GM10248 (cell line): ENCODE measurements at regions of chr3 and their contacts with region 1.

Region 1: DNA sequence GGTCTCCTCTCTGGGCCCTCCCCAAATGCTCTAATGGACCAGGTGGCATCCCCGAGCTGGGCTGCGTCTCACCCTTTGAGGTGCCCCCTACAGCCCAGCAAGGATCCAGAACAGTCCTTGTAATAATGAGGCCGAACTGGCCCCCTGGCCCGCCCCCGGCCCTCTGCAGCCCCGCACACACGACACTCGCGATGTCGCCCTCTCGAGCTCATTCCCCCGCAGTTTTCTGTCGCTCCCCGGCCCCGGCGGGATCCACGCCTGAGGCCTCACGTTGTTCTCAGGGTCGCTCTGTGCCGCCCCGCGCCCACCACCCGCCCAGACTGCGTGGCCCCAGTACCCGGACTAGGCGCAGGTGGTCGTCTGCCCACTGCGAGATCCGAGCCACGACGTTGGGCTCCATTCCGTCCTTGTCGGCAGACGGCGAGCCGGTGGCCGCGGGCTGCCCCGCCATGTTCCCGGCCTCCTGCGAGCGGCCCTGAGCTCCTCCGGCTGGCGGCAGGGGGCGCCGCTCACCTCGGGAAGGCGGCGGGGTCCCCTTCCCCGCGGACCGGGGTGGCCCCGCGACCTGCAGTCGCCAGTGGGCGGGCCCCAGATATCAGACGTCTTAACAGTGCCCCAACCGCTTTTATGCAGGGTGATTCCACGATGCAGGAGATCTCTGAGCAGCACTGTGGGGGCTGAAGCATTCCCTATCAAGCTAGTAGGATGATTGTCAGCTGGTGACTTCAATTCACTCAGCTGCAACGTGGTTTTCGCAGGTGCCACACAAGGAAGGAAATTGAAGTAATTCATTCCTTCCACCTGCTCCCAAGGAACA is at the start of gene C3orf33:
- DNase-seq: peak; percentile 92
- CTCF ChIP-seq: peak; percentile 95

Region 2: GRCh38 chr3:155766206-155766605 is 39.8 kb before region 1 on chr3:
- CTCF ChIA-PET with region 1: interaction called, 19 read pairs
- POLR2A ChIA-PET with region 1: no interaction called
- DNase-seq: no peak
- CTCF ChIP-seq: no peak

Region 3: DNA sequence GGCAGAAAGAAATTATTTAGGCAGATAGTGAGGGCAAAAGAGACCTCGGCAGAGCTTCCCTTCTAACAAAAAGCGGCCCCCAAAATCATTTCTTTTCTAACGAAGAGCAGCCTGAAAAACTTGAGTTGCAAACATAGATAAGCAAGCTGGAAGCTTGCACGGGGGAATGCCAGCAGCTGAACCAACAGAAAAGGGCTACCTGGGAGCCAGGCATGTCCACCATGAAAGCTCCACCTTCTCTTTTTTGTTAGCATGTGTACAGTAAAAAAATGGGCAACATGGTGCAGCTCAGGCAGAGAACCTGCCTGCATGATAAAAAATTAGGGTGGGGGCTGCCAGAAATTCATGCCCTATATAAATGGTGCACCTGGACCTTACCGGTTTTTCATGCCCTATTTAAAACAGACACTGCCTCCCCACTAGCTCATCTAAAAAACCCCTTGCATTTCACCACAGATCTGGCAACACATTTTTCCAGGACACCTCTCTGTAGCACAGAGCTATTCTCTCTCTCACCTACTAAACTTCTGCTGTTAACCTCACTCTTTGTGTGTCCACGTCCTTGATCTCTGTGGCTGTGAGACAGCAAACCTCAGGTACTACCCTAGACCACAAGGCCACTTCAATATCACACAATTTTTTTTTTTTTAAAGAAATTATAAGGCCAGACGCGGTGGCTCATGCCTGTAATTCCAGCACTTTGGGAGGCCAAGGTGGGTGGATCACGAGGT is 29.5 kb after region 1 on chr3:
- CTCF ChIA-PET with region 1: interaction called, 19 read pairs
- POLR2A ChIA-PET with region 1: no interaction called
- DNase-seq: no peak
- CTCF ChIP-seq: no peak

Region 4: GRCh38 chr3:155854141-155854940 is 48.3 kb after region 1 on chr3 and contains the start of gene SLC33A1:
- CTCF ChIA-PET with region 1: interaction called, 24 read pairs
- POLR2A ChIA-PET with region 1: interaction called, 8 read pairs
- DNase-seq: peak; percentile 98
- CTCF ChIP-seq: no peak

Region 5: GRCh38 chr3:155870133-155870944 is 64.3 kb after region 1 on chr3 and contains the start of gene GMPS:
- CTCF ChIA-PET with region 1: interaction called, 44 read pairs
- POLR2A ChIA-PET with region 1: interaction called, 6 read pairs
- DNase-seq: peak; percentile 98
- CTCF ChIP-seq: peak; percentile 63

Region 6: DNA sequence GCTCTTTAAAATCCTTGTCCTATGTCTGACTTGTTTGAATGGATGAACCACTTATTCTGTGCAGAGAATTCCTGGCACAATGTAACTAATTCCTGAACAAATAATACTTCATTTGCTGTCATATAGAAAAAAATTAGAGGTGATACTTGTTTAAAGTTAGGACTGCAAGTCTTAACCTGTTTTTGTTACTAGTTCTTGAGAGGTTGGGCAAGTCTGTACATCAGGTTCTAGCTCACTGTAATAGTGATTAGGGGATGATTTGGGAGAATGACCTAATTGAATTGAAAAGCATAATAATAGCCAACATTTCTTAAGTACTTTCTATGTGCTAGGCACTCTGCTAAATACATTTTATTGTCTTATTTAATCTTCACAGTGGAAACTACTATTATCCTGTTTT is 113.7 kb after region 1 on chr3:
- CTCF ChIA-PET with region 1: interaction called, 25 read pairs
- POLR2A ChIA-PET with region 1: no interaction called
- DNase-seq: no peak
- CTCF ChIP-seq: no peak